ENCODE measurements at regions of chr10 and their contacts with region 1.

Region 1: GRCh38 chr10:62244780-62245467 is 23.7 kb downstream of the RTKN2 start:
- DNase-seq: peak; percentile 37 to 58
- H3K4me3 ChIP-seq: no peak overlapping the region
- H3K27ac ChIP-seq: no peak overlapping the region
- H3K4me1 ChIP-seq: peaks cover 35% of the 10 kb centered on the region
- H3K27me3 ChIP-seq: no peaks in the 10 kb centered on the region
- CTCF ChIP-seq: peak; percentile 88

Region 2: DNA sequence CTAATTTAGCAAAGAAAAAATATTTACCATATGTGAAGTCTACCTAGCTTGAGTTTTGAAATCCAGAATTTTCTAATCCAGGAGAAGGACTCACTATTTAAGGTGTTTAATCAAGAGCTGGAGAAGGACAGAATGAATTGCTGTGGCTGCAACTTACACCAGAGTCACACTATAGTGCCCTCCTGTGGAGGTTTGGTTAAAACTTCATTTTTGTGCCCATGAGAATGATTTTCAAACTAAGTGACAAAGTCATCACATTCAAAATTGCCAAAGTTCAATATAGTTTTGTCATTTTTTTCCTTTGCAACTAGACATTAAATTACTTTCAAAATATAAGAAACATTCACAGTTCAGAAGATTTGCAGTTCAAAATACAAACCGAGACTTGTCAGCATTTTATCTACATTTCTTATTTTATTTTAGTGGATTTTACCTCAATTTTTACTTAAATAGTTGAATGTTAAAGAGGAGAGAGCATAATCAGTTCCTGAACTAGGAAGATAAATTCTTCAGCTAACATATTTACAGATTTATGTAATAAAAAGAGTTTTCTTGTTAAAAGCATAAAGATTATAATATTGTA is 511.5 kb before region 1 on chr10:
- CTCF ChIA-PET with region 1: no interaction called
- POLR2A ChIA-PET with region 1: no interaction called
- intact Hi-C with region 1: loop called (anchors 10 kb)
- DNase-seq: peak in 1 of 2 experiments; percentile 9
- H3K4me3 ChIP-seq: no peak overlapping the region
- H3K27ac ChIP-seq: no peak overlapping the region
- H3K4me1 ChIP-seq: no peaks in the 10 kb centered on the region
- H3K27me3 ChIP-seq: no peaks in the 10 kb centered on the region
- CTCF ChIP-seq: peak; percentile 79

Region 3: DNA sequence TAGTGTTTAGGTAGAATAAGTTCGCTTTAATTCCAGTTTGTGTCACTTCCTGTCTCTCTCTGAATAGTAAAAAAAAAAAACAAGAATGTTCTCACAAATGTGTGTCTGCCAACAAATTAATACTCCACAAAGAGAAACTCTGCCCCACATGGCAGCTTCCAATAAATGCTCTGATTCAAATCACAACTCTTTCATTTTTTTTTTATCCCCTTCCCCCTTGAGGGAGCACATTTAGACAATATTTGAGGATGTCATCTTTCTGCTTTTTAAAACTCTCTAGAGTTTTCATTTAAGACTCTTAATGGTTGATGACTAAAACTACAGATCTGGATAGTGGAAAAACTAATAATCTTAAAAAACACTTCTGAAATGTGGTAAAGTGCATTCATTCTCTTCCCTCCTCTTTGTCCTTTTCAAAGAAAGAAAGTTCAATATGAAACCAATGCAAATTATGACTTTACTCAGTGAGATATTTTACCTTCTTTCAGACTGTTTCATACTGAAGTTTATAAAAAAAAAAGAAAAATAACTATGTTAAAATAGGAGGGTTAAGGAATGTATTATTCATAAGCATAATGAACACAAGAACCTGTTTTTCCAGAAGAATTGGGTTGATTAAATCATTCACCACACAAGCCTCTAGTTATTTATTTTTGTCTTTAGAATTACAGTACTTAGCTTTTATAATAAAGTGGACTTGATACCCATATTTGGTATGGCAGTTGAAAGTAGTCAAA is 301.1 kb before region 1 on chr10:
- CTCF ChIA-PET with region 1: interaction called, 3 read pairs
- POLR2A ChIA-PET with region 1: no interaction called
- intact Hi-C with region 1: loop called (anchors 2 kb)
- DNase-seq: peak; percentile 7 to 88
- H3K4me3 ChIP-seq: peak overlapping the region; percentile 37; the same call in 1 of the 2 replicates
- H3K27ac ChIP-seq: peak overlapping the region; percentile 83
- H3K4me1 ChIP-seq: peaks cover 53% of the 10 kb centered on the region
- H3K27me3 ChIP-seq: no peaks in the 10 kb centered on the region
- CTCF ChIP-seq: no peak

Region 4: DNA sequence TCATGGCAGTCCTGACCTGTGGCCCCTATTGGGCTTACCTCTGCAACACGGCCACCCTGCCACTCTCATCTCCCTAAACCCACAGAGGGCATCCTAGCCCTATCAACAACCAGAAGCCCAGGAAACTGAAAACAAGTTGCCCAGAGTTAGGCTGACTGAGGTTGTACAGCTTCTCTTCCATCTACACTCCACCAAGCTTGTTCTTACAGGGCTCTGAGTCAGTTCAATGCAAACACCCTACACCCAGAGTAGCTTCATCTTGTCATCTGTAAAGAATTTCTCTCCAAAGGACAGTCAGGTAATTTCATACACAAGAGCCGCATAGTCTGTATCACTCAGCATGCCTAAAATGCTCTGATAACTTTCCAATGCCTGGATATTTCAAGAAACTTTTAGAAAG is 168.0 kb before region 1 on chr10:
- CTCF ChIA-PET with region 1: interaction called, 5 read pairs
- POLR2A ChIA-PET with region 1: interaction called, 7 read pairs
- intact Hi-C with region 1: loop called (anchors 1 kb)
- DNase-seq: peak; percentile 59 to 98
- H3K4me3 ChIP-seq: peak overlapping the region; percentile 15; the same call in 1 of the 2 replicates
- H3K27ac ChIP-seq: peak overlapping the region; percentile 65
- H3K4me1 ChIP-seq: peaks cover 41% of the 10 kb centered on the region
- H3K27me3 ChIP-seq: no peaks in the 10 kb centered on the region
- CTCF ChIP-seq: no peak; the same call in 1 of the 2 replicates

Measured in PC-9 (cell line).